Right ventricle myocardium superior (tissue), 1 donor: ENCODE measurements at regions of chr13 and their contacts with region 1.

Region 1: GRCh38 chr13:98842864-98843481 is 90.5 kb upstream of the SLC15A1 start:
- DNase-seq: peak; percentile 61
- ATAC-seq: peak; percentile 90

Region 2: DNA sequence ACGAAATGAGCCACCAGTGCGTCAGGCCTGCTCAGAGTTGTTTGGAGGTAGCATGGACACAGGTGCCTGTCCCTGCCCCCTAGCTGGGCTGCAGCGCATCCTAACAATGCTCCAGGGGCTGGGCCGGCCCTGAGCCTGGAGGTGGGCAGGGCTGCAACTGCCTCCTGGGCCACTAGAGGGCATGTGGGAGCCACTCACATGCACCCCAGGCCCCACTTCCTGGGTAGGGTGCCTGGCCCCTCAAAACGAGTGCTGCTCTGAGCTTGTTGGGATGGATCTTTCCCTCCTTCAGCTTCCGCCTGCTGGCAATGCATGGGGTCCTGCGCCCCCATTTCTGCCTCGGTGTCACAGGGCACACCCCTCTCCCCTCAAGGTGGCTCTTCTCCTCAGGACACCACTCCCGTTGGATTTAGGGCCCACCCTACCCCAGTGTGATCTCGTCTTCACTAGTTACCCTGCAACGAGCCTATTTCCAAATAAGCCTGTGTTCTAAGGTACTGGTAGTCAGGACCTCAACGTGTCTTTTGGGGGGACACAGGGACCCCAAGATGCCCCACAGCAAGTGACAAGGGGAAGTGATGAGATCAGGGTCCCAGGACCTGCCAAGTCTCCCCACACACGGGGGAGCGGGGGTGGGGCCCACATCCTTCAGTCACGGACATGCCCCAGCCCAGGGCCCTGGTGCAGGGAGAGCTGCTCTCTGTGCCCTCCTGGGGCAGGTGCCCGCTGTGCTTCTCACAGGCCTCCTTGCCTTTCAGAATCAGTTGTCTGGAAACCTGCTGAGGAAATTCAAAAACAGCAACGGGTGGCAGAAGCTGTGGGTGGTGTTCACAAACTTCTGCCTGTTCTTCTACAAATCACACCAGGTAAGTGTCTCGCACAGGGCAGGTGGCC is 397.4 kb before region 1 on chr13:
- intact Hi-C with region 1: loop called (anchors 10 kb)
- DNase-seq: peak; percentile 85
- ATAC-seq: peak; percentile 88

Region 3: DNA sequence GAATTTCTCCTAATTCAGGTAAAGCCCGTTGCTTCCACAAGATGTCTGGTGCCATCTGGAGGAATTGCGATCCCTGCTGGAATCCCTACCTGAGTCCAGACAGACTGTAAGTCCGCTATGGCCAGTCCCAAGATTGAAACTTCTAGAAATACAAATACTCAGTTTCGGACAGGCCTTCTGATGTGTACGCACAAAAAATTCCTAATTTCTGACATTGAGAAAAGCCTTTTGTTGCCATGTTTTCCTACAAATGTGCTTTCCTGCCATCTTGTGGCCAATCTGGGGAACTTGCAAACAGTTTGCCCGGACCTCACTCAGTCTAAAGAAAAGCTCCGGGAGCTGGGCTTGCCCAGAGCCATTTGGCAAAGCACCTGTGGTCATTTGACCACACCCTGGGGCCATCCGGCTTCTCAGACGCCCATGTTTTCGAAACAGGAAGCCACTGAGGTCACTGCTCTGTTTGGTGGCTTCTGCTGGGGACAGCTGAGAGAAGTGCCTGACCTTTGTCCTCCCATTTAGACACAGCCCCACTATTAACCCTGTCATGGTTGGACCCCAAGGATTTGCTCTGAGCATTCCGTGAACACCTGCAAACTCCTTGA is 169.9 kb before region 1 on chr13:
- intact Hi-C with region 1: loop called (anchors 5 kb)
- DNase-seq: peak; percentile 68
- ATAC-seq: peak; percentile 88

Region 4: DNA sequence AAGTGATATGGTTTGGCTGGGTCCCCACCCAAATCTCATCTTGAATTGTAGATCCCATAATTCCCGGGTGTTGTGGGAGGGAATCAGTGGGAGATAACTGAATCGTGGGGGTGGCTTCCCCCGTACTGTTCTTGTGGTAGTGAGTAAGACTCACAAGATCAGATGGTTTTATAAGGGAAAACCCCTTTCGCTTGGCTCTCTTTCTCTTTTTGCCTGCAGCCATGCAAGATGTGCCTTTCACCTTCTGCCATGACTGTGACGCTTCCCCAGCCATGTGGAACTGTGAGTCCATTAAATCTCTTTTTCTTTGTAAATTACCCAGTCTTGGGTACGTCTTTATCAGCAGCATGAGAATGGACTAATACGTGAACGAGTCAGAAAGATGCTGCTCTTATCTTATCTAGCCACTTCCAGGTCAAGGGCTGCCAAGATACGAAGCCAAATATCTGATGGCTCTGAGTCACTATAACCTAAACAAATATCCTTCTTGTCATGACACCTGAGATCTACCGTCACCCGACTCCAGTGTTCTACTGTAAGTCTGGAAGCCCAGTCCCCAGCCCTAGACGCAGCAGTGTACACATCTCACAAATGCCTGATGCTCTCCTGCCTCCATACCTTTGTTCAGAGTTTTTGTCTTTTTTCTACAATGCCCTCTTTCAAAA is 136.4 kb before region 1 on chr13:
- intact Hi-C with region 1: no loop called
- DNase-seq: no peak
- ATAC-seq: no peak

Region 5: DNA sequence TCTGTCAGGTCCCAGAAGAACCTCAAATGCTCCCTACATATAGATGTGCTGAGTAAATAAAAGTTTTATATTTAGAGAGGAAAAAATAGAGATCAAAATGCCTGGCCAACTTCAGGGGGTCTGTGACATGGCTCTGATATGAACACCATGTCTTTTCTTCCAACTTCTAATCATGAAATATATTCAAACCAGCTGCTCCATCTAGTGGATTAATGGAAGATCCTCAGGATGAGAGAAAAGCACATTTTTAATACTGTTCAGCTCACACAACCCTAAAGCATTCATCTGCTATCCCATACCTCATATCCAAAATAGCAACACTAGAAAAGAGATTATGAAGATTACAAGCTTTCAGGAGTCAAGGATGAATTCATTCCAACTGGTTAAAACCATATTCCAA is 190.8 kb after region 1 on chr13:
- intact Hi-C with region 1: loop called (anchors 10 kb)
- DNase-seq: no peak
- ATAC-seq: peak; percentile 85

Region 6: DNA sequence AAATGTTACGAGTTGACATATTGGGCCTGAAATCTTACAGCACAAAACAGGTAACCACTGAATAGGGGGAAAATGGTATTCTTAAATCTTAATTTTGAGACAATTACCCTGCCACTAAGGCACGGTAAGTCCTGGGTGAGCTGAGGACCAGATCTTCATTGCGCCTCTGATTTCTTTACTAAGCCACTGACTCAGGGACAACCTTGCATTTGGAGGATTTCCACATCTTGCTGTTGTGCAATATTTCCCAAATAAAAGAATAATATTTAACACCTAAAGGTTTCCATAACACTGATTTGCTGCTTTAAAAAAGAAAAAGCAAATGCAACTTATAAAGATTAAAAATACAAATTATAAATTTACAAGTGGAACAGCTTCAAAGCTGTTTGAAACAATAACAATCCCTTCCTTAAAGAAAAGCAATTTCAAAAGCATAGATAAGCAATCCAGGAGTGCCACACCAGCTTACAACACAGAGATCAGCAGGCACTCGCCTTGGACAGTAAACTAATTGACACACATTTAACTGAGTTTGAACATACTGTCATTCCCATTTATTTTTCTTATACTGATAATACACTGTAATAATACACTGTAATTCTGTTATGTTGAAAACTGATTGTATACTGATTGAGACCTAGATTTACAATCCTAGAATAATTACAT is 214.5 kb after region 1 on chr13:
- intact Hi-C with region 1: no loop called
- DNase-seq: no peak
- ATAC-seq: peak; percentile 35